ENCODE measurements at regions of chr12 and their contacts with region 1.

Region 1: DNA sequence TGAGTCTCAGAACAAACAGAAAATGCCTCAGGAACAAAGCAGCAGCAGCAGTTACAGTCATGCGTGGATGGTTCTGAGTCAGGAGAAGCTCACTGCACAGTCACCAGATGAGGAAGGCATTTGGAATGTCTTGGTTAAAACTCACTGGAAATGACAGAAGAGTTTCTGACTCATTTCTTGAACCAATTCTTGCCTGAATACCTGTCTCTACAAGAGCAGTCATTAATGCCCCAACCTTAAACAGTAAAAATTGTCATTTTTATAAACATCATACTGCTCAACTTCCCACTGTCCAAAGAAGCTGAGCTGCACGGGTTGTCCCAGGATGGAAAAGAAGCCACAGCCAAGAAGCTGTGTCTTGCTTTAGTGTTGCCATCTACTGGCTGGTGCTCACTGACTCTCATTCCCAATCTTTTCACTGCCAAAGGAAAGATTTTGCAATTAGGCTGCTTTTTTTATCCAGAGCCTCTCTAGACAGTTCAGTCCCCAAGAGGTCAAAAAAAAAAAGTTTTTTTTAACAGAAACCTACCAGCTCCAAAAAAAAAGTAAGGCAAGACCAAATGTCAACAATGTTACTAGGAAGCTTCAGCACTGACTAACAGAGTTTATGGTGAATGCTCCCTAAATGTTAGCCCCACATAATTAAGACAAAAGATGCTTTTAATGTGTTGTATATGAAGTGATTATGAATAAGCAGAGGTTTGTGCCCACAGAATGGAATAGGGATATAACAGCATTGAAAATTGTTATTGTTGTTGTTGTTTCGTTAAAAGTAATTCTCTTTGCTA is 40.4 kb downstream of the KICS2 start:
- DNase-seq: no peak
- ATAC-seq: peak; percentile 89
- H3K4me3 ChIP-seq: peak overlapping the region; percentile 14
- H3K27ac ChIP-seq: peak overlapping the region; percentile 38
- H3K4me1 ChIP-seq: peaks cover 14% of the 10 kb centered on the region
- H3K27me3 ChIP-seq: no peaks in the 10 kb centered on the region
- CTCF ChIP-seq: peak; percentile 72

Region 2: GRCh38 chr12:63843721-63844390 is 337.8 kb before region 1 on chr12:
- intact Hi-C with region 1: loop called (anchors 10 kb)
- DNase-seq: peak; percentile 94
- ATAC-seq: peak; percentile 97
- H3K4me3 ChIP-seq: peak overlapping the region; percentile 86
- H3K27ac ChIP-seq: peak overlapping the region; percentile 88
- H3K4me1 ChIP-seq: no peaks in the 10 kb centered on the region
- H3K27me3 ChIP-seq: no peaks in the 10 kb centered on the region
- CTCF ChIP-seq: peak; percentile 87

Region 3: GRCh38 chr12:63882844-63883243 is 298.9 kb before region 1 on chr12:
- intact Hi-C with region 1: no loop called
- DNase-seq: no peak
- ATAC-seq: no peak
- H3K4me3 ChIP-seq: no peak overlapping the region
- H3K27ac ChIP-seq: no peak overlapping the region
- H3K4me1 ChIP-seq: no peaks in the 10 kb centered on the region
- H3K27me3 ChIP-seq: no peaks in the 10 kb centered on the region
- CTCF ChIP-seq: no peak

Region 4: GRCh38 chr12:64240781-64241180 is 59.1 kb after region 1 on chr12:
- intact Hi-C with region 1: loop called (anchors 10 kb)
- DNase-seq: no peak
- ATAC-seq: no peak
- H3K4me3 ChIP-seq: no peak overlapping the region
- H3K27ac ChIP-seq: no peak overlapping the region
- H3K4me1 ChIP-seq: no peaks in the 10 kb centered on the region
- H3K27me3 ChIP-seq: no peaks in the 10 kb centered on the region
- CTCF ChIP-seq: no peak